ENCODE measurements at regions of chr5 and their contacts with region 1.

Region 1: DNA sequence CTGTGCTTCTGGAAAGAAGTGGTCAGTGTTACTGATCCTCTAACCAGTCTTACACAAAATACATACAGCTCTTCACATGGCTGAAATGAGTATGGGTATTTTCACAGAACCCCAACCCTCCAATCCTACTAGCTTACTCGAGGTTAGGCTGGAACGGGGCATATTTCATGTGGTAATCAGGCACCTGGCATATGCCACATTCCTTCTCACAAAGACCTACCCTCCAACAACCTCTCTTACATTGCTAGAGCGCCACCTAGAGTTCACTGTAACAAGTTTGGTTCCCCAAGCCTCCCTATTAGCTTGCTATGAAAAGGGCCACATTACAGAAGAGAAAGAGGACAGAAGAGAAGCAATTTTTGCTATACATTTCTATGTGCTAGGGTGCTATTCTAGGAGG is 597.3 kb downstream of the PRELID2 start:
- DNase-seq: peak; percentile 90
- H3K4me3 Mint-ChIP-seq: no peak overlapping the region
- H3K27ac Mint-ChIP-seq: no peak overlapping the region
- H3K4me1 Mint-ChIP-seq: peaks cover 5% of the 10 kb centered on the region
- H3K27me3 Mint-ChIP-seq: no peaks in the 10 kb centered on the region
- CTCF ChIP-seq: peak; percentile 82

Region 2: GRCh38 chr5:144691936-144692335 is 545.9 kb before region 1 on chr5:
- CTCF ChIA-PET with region 1: no interaction called
- POLR2A ChIA-PET with region 1: no interaction called
- intact Hi-C with region 1: loop called (anchors 2 kb)
- DNase-seq: no peak
- H3K4me3 Mint-ChIP-seq: no peak overlapping the region
- H3K27ac Mint-ChIP-seq: no peak overlapping the region
- H3K4me1 Mint-ChIP-seq: no peaks in the 10 kb centered on the region
- H3K27me3 Mint-ChIP-seq: no peaks in the 10 kb centered on the region
- CTCF ChIP-seq: no peak

Region 3: DNA sequence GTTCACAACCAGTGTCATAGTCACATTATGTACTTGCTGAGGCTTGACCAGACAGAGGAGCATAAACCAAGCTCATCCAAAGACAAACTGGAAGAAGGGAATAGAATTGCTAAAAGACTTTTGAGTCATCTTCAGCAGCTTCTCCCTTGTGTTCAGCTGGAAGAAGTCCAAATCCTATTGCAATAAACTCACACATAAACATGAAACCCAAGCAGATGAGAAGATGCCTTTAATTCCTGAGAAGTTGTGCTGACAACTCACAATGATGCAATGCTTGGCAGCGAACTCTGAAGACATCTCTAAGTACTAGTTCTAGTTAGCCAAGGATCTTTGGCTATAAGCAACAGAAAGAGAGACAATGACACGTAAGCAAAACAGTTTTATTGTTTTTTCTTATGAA is 425.1 kb before region 1 on chr5:
- CTCF ChIA-PET with region 1: no interaction called
- POLR2A ChIA-PET with region 1: no interaction called
- intact Hi-C with region 1: loop called (anchors 2 kb)
- DNase-seq: peak; percentile 99
- H3K4me3 Mint-ChIP-seq: no peak overlapping the region
- H3K27ac Mint-ChIP-seq: peak overlapping the region; percentile 96
- H3K4me1 Mint-ChIP-seq: peaks cover 18% of the 10 kb centered on the region
- H3K27me3 Mint-ChIP-seq: no peaks in the 10 kb centered on the region
- CTCF ChIP-seq: no peak